PC-3 (cell line): ENCODE measurements at regions of chr9 and their contacts with region 1.

Region 1: GRCh38 chr9:73683862-73684591 is 532.4 kb downstream of the ANXA1 start:
- DNase-seq: peak; percentile 53
- ATAC-seq: 0 out of 2 replicates have a peak, but pooled peaks have one; percentile 38
- H3K4me3 ChIP-seq: no peak overlapping the region
- H3K27ac ChIP-seq: peak overlapping the region; percentile 68
- H3K4me1 ChIP-seq: peaks cover 6% of the 10 kb centered on the region; the same call in 1 of the 2 replicates
- H3K27me3 ChIP-seq: no peaks in the 10 kb centered on the region
- CTCF ChIP-seq: peak; percentile 72

Region 2: DNA sequence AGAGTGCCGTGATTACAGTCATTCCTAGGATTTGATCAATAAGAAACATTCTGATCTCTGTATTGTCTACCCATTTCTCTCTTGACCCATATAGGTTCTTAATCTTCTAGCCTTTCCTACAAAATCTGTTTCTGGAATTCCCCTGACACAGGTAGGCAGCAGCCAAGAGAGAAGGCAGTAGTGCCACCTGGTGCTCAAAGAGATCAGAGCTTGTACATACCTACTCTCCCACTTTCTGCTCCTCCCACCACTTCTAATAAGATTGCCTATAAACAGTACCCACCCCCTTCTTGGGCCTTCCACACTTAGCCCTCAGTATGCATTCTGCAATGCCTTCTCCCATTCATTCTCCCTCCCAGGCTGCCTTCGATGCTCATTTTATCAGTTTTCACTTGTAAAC is 695.7 kb after region 1 on chr9:
- CTCF ChIA-PET with region 1: no interaction called
- POLR2A ChIA-PET with region 1: no interaction called
- intact Hi-C with region 1: loop called (anchors 10 kb)
- DNase-seq: peak; percentile 46
- ATAC-seq: peak; percentile 43; the same call in 1 of the 2 replicates
- H3K4me3 ChIP-seq: no peak overlapping the region
- H3K27ac ChIP-seq: no peak overlapping the region
- H3K4me1 ChIP-seq: no peaks in the 10 kb centered on the region
- H3K27me3 ChIP-seq: no peaks in the 10 kb centered on the region
- CTCF ChIP-seq: peak; percentile 52

Region 3: GRCh38 chr9:74570879-74571512 is 887.0 kb after region 1 on chr9:
- CTCF ChIA-PET with region 1: no interaction called
- POLR2A ChIA-PET with region 1: no interaction called
- intact Hi-C with region 1: loop called (anchors 5 kb)
- DNase-seq: peak; percentile 47
- ATAC-seq: no peak
- H3K4me3 ChIP-seq: no peak overlapping the region
- H3K27ac ChIP-seq: no peak overlapping the region
- H3K4me1 ChIP-seq: no peaks in the 10 kb centered on the region
- H3K27me3 ChIP-seq: no peaks in the 10 kb centered on the region; the same call in 1 of the 2 replicates
- CTCF ChIP-seq: peak; percentile 55

Region 4: GRCh38 chr9:74645007-74645639 is 961.1 kb after region 1 on chr9:
- CTCF ChIA-PET with region 1: no interaction called
- POLR2A ChIA-PET with region 1: no interaction called
- intact Hi-C with region 1: loop called (anchors 5 kb)
- DNase-seq: peak; percentile 19
- ATAC-seq: no peak; the same call in 1 of the 2 replicates
- H3K4me3 ChIP-seq: no peak overlapping the region
- H3K27ac ChIP-seq: no peak overlapping the region
- H3K4me1 ChIP-seq: no peaks in the 10 kb centered on the region
- H3K27me3 ChIP-seq: peaks cover 22% of the 10 kb centered on the region
- CTCF ChIP-seq: peak; percentile 66